Activated naive CD4-positive, alpha-beta T cell treated with anti-CD3 and anti-CD28 coated beads for 36 hours (primary cell): ENCODE measurements at regions of chrX and their contacts with region 1.

Region 1: DNA sequence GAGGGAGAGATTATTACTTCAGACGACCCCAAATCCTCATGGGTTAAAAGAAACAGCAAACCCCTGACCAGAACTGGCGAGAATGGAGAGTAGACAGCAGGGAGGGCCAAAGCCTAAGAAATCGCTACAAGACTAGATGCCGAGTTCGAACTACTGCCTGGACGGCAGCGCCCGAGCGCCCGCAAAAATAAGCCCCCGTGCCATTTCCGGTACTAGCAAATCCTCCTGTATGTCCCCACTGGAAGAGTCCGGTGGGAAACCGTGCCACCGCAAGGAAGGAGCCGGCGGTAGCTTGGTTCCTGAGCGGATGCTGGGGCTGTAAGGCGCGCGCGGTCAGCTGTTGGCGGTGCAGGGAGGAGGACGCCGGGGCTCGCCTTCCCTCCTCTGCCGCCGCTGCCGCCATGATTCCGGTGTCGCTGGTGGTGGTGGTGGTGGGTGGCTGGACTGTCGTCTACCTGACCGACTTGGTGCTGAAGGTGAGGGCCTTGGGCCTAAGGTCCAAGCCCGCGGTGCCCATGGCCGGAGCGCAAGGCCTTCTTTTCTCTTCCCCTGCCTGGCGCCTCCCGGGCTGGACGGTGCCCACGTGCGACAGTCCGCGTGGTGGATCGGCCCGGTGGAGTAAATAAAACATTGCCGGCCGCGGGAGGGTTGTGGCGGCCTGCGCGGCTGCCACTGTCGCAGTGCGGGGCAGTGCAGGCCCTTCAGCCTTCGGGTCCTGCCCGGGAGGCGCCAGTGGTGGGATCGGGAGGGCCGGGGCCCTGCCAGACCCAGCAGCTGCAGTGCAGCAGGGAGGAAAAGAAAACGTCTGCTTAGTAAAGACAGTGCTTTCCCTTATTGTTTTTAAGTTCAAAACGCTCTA is at the start of gene MBTPS2:
- DNase-seq: peak; percentile 86
- H3K4me3 Mint-ChIP-seq: peak within 1 kb of the TSS; percentile 81
- H3K27ac Mint-ChIP-seq: peak within 1 kb of the TSS; percentile 92
- H3K4me1 Mint-ChIP-seq: peaks cover 9% of the 10 kb centered on the region
- H3K27me3 Mint-ChIP-seq: no peaks in the 10 kb centered on the region
- total RNA-seq, gene MBTPS2: 4.7 to 5.4 TPM

Region 2: GRCh38 chrX:21374163-21374993 is 465.2 kb before region 1 on chrX and contains the start of gene CNKSR2:
- CTCF ChIA-PET with region 1: no interaction called
- intact Hi-C with region 1: loop called (anchors 5 kb)
- DNase-seq: peak; percentile 63
- H3K4me3 Mint-ChIP-seq: peak within 1 kb of the TSS; percentile 92
- H3K27ac Mint-ChIP-seq: peak within 1 kb of the TSS; percentile 61
- H3K4me1 Mint-ChIP-seq: peaks cover 28% of the 10 kb centered on the region
- H3K27me3 Mint-ChIP-seq: no peaks in the 10 kb centered on the region
- total RNA-seq, gene CNKSR2: 6.6 to 8.4 TPM

Region 3: GRCh38 chrX:21907260-21907659 is 67.7 kb after region 1 on chrX:
- CTCF ChIA-PET with region 1: no interaction called
- intact Hi-C with region 1: no loop called
- DNase-seq: no peak
- H3K4me3 Mint-ChIP-seq: no peak overlapping the region
- H3K27ac Mint-ChIP-seq: no peak overlapping the region
- H3K4me1 Mint-ChIP-seq: peaks cover 2% of the 10 kb centered on the region
- H3K27me3 Mint-ChIP-seq: no peaks in the 10 kb centered on the region

Region 4: GRCh38 chrX:21926527-21927278 is 87.1 kb after region 1 on chrX:
- CTCF ChIA-PET with region 1: interaction called, 3 read pairs
- intact Hi-C with region 1: loop called (anchors 1 kb)
- DNase-seq: peak; percentile 26
- H3K4me3 Mint-ChIP-seq: no peak overlapping the region
- H3K27ac Mint-ChIP-seq: peak overlapping the region; percentile 68
- H3K4me1 Mint-ChIP-seq: peaks cover 26% of the 10 kb centered on the region
- H3K27me3 Mint-ChIP-seq: no peaks in the 10 kb centered on the region

Region 5: GRCh38 chrX:21972721-21973120 is 133.2 kb after region 1 on chrX:
- CTCF ChIA-PET with region 1: interaction called, 3 read pairs
- intact Hi-C with region 1: loop called (anchors 1 kb)
- DNase-seq: peak; percentile 64
- H3K4me3 Mint-ChIP-seq: no peak overlapping the region
- H3K27ac Mint-ChIP-seq: peak overlapping the region; percentile 87
- H3K4me1 Mint-ChIP-seq: peaks cover 35% of the 10 kb centered on the region
- H3K27me3 Mint-ChIP-seq: no peaks in the 10 kb centered on the region

Region 6: DNA sequence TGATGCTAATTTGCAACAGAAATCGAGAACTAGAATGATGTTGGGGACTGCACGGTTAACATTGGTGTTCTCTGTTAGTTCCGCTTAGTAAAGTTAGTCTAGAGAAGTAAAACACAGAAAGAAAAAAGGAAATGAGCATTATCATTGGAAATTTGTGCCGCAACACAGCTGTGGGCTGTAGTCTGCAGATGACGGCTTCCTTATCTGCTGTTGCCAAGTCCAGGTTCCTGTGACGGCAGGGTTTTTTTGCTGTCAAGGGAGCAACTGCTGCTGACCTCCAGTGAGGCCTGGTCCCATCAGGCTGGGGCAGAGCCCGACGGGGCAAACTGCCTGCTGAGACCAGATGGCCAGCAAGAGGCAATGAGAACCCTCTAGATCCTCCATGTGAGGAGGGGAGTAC is 153.7 kb after region 1 on chrX:
- CTCF ChIA-PET with region 1: no interaction called
- intact Hi-C with region 1: no loop called
- DNase-seq: no peak
- H3K4me3 Mint-ChIP-seq: no peak overlapping the region
- H3K27ac Mint-ChIP-seq: no peak overlapping the region
- H3K4me1 Mint-ChIP-seq: peaks cover 57% of the 10 kb centered on the region
- H3K27me3 Mint-ChIP-seq: no peaks in the 10 kb centered on the region

Region 7: GRCh38 chrX:22135994-22136684 is 296.6 kb after region 1 on chrX:
- CTCF ChIA-PET with region 1: no interaction called
- intact Hi-C with region 1: loop called (anchors 1 kb)
- DNase-seq: peak; percentile 17
- H3K4me3 Mint-ChIP-seq: no peak overlapping the region
- H3K27ac Mint-ChIP-seq: no peak overlapping the region
- H3K4me1 Mint-ChIP-seq: peaks cover 12% of the 10 kb centered on the region
- H3K27me3 Mint-ChIP-seq: no peaks in the 10 kb centered on the region

Region 8: DNA sequence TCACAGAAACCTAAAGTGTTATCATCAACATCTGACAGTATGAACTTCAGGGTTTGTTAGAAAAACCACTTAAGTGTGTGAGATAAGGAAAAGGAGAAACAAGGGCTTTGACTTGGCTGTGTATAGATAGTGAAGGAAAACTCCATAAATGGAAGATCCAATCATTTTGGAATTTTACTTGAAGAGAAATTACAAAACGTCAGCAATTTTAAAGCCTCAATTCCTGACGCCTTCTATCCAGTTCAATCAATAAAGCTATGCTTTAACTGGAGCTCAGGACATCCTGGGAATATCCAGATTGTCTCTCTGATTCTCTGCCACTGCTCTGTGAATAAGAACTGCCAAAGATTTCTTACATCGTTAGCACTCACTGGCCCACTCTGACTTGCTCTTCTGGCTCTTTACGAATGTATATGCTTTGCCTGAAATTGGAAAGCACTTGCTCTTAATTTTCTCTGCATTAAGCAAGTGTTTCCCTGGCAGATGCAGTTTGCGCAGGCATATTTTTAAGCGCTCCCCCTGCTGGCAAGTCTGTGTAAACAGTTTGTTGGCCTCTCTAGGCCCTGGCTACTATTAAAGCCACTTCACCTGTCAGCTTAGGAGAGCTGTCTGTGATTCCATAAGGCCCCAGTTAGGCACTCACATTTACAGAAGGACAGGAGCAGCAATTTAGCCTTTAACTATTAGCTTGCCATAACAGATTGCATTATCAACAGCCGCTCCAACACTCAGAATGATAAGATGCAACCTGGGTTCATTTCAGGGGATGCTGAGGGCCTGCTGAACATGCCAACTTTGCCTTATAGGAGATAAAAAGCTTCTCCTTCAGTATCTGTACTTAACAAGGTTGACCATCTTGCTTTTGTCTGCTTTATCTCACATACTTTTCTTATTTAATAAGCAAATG is 908.8 kb after region 1 on chrX:
- CTCF ChIA-PET with region 1: no interaction called
- intact Hi-C with region 1: loop called (anchors 1 kb)
- DNase-seq: peak; percentile 38
- H3K4me3 Mint-ChIP-seq: no peak overlapping the region
- H3K27ac Mint-ChIP-seq: no peak overlapping the region
- H3K4me1 Mint-ChIP-seq: no peaks in the 10 kb centered on the region
- H3K27me3 Mint-ChIP-seq: peaks cover 4% of the 10 kb centered on the region